ENCODE measurements at regions of chr6 and their contacts with region 1.

Region 1: GRCh38 chr6:72622094-72622940 is 453 bp downstream of the KCNQ5 start:
- DNase-seq: peak; percentile 33 to 60 (median 43)
- H3K4me3 ChIP-seq: peak overlapping the region; percentile 30 to 65
- H3K4me3 Mint-ChIP-seq: peak overlapping the region; percentile 85 to 96 (median 91)
- H3K27ac ChIP-seq: no peak overlapping the region
- H3K27ac Mint-ChIP-seq: peak overlapping the region in 4 of 7 donors; percentile 55 to 89 (median 66)
- H3K4me1 ChIP-seq: peaks cover 32% of the 10 kb centered on the region
- H3K4me1 Mint-ChIP-seq: peaks cover 21 to 43% (median 30%) of the 10 kb centered on the region in 4 donors
- H3K27me3 ChIP-seq: no peaks in the 10 kb centered on the region
- H3K27me3 Mint-ChIP-seq: no peaks in the 10 kb centered on the region

Region 2: DNA sequence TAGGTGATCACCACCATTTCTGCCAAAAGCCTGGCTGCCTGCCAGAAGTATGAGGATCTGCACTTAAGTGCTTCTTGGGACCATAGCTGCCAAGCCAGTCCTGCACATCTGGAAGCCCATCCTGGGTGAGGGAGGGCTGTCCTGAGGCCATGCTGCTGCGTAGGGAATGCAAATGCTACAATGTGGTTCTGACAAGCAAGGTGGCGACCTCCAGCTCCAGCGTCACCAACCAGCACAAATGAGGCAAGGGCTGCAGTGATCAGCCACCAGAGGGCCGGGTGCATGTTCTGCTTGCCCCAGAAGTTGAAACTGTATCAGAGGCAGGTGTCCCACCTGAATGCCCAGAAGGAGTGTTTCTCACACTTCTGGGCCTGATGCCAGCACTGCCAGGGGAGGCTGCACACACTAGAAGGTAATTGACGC is 99.6 kb before region 1 on chr6:
- CTCF ChIA-PET with region 1: no interaction called
- POLR2A ChIA-PET with region 1: no interaction called
- intact Hi-C with region 1: loop called (anchors 5 kb)
- DNase-seq: peak in 2 of 5 donors; percentile 2 to 5
- H3K4me3 ChIP-seq: no peak overlapping the region
- H3K4me3 Mint-ChIP-seq: no peak overlapping the region
- H3K27ac ChIP-seq: no peak overlapping the region
- H3K27ac Mint-ChIP-seq: peak overlapping the region in 1 of 7 donors; percentile 9
- H3K4me1 ChIP-seq: no peaks in the 10 kb centered on the region
- H3K4me1 Mint-ChIP-seq: no peaks in the 10 kb centered on the region
- H3K27me3 ChIP-seq: no peaks in the 10 kb centered on the region
- H3K27me3 Mint-ChIP-seq: peaks cover 2 to 9% of the 10 kb centered on the region in 2 donors

Measured in CD4-positive, alpha-beta memory T cell (primary cell).